HCT116 (cell line): ENCODE measurements at regions of chr2 and their contacts with region 1.

Region 1: GRCh38 chr2:237154082-237154638 is 68.5 kb downstream of the COPS8 start:
- DNase-seq: peak; percentile 52
- ATAC-seq: peak; percentile 91
- H3K4me3 ChIP-seq: no peak overlapping the region
- H3K27ac ChIP-seq: no peak overlapping the region
- H3K4me1 ChIP-seq: no peaks in the 10 kb centered on the region
- H3K27me3 ChIP-seq: no peaks in the 10 kb centered on the region
- CTCF ChIP-seq: peak; percentile 80 to 91 (median 88)
- POLR2A ChIP-seq: no peak
- RAD21 ChIP-seq: peak; percentile 98

Region 2: GRCh38 chr2:236646441-236646840 is 507.7 kb before region 1 on chr2:
- CTCF ChIA-PET with region 1: no interaction called
- POLR2A ChIA-PET with region 1: no interaction called
- RAD21 ChIA-PET with region 1: no interaction called
- intact Hi-C with region 1: no loop called
- DNase-seq: no peak
- ATAC-seq: no peak
- H3K4me3 ChIP-seq: no peak overlapping the region
- H3K27ac ChIP-seq: no peak overlapping the region
- H3K4me1 ChIP-seq: peaks cover 3 to 9% of the 10 kb centered on the region in 2 experiments; a peak in 2 of 4 replicates
- H3K27me3 ChIP-seq: peaks cover 44% of the 10 kb centered on the region
- CTCF ChIP-seq: no peak
- POLR2A ChIP-seq: no peak
- RAD21 ChIP-seq: no peak

Region 3: GRCh38 chr2:237413777-237414661 is 259.9 kb after region 1 on chr2 and contains the start of gene COL6A3:
- CTCF ChIA-PET with region 1: interaction called, 4 read pairs
- POLR2A ChIA-PET with region 1: no interaction called
- RAD21 ChIA-PET with region 1: interaction called in 1 of 2 experiments, 3 read pairs
- intact Hi-C with region 1: loop called (anchors 1 kb)
- DNase-seq: no peak
- ATAC-seq: no peak
- H3K4me3 ChIP-seq: no peak within 1 kb of the TSS
- H3K27ac ChIP-seq: no peak within 1 kb of the TSS
- H3K4me1 ChIP-seq: peaks cover 0 to 3% of the 10 kb centered on the region in 2 experiments; a peak in 1 of 4 replicates
- H3K27me3 ChIP-seq: peaks cover 25% of the 10 kb centered on the region; the same call in 1 of the 2 replicates
- CTCF ChIP-seq: no peak
- POLR2A ChIP-seq: no peak
- RAD21 ChIP-seq: no peak
- total RNA-seq, gene COL6A3: 1.2 TPM

Region 4: GRCh38 chr2:237572021-237572741 is 418.0 kb after region 1 on chr2:
- CTCF ChIA-PET with region 1: interaction called, 20 read pairs
- POLR2A ChIA-PET with region 1: no interaction called
- RAD21 ChIA-PET with region 1: interaction called in 1 of 2 experiments, 3 read pairs
- intact Hi-C with region 1: loop called (anchors 1 kb)
- DNase-seq: peak; percentile 79
- ATAC-seq: peak; percentile 90
- H3K4me3 ChIP-seq: no peak overlapping the region
- H3K27ac ChIP-seq: no peak overlapping the region
- H3K4me1 ChIP-seq: peaks cover 12 to 30% of the 10 kb centered on the region in 2 experiments
- H3K27me3 ChIP-seq: no peaks in the 10 kb centered on the region
- CTCF ChIP-seq: peak; percentile 93 to 98 (median 97)
- POLR2A ChIP-seq: no peak
- RAD21 ChIP-seq: peak; percentile 99

Region 5: GRCh38 chr2:237723602-237724001 is 569.4 kb after region 1 on chr2:
- CTCF ChIA-PET with region 1: no interaction called
- POLR2A ChIA-PET with region 1: no interaction called
- RAD21 ChIA-PET with region 1: no interaction called
- intact Hi-C with region 1: no loop called
- DNase-seq: no peak
- ATAC-seq: peak; percentile 95
- H3K4me3 ChIP-seq: no peak overlapping the region
- H3K27ac ChIP-seq: no peak overlapping the region
- H3K4me1 ChIP-seq: peaks cover 6 to 35% of the 10 kb centered on the region in 2 experiments; a peak in 3 of 4 replicates
- H3K27me3 ChIP-seq: no peaks in the 10 kb centered on the region
- CTCF ChIP-seq: no peak
- POLR2A ChIP-seq: no peak
- RAD21 ChIP-seq: no peak